CD4-positive, alpha-beta T cell (primary cell): ENCODE measurements at regions of chr10 and their contacts with region 1.

Region 1: DNA sequence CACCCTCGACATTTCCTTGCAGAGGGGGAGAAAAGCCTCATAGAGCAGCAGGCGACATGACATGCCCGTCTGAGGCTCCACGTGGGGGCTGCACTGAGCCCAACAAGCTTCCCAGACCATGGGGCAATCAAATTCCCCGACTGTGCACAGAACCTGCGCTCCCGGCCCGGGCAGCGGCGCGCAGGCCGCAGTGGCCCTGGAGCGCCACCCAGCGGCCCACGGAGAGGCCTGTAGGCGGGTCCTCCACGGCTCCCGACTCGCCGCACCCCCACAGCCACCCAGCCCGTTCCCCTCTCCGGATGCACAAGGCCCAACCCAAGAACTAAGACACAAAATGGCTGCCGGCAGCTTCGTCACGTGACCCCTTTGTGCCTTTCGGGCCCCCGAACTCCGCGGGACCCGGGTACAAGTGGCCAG is 816 bp downstream of the EPC1 start:
- DNase-seq: peak; percentile 91 to 98 (median 95)
- ATAC-seq: peak; percentile 82
- H3K4me3 ChIP-seq: peak overlapping the region; percentile 98
- H3K4me3 Mint-ChIP-seq: peak overlapping the region; percentile 97
- H3K27ac ChIP-seq: peak overlapping the region; percentile 99 to 100
- H3K27ac Mint-ChIP-seq: peak overlapping the region; percentile 100
- H3K4me1 ChIP-seq: peaks cover 27% of the 10 kb centered on the region
- H3K4me1 Mint-ChIP-seq: peaks cover 85% of the 10 kb centered on the region
- H3K27me3 ChIP-seq: no peaks in the 10 kb centered on the region
- H3K27me3 Mint-ChIP-seq: no peaks in the 10 kb centered on the region
- CTCF ChIP-seq: peak; percentile 94

Region 2: DNA sequence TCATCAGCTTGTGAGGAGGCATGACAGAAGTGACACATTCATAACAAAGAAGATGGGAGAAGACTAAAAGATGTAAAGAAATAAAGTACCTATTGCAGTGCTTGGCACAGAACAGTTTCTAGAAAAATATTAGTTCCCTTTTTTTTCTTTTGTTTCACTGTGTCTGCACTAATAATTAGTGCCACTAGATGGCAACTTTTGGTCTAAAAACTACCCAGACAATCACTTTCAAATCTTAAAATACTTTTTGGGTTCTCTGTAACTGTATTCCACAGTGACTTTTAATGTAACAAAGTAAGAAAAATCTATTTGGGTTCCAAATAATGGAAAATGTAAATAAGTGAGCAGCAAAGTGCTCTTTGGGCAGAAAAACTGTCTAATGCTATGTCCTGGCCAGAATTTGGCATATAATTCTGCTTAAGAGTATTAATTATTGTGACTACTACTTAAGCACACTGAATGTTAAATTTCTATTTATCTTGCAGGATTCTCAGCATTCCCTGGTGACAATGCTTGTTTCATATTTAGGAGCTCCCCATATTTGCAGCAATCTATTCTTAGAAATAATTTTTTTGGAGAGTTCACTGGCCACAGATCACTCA is 155.2 kb before region 1 on chr10:
- CTCF ChIA-PET with region 1: interaction called, 5 read pairs
- POLR2A ChIA-PET with region 1: no interaction called
- intact Hi-C with region 1: loop called (anchors 1 kb)
- DNase-seq: peak in 3 of 14 experiments; percentile 53 to 68 (median 64)
- ATAC-seq: peak; percentile 63
- H3K4me3 ChIP-seq: no peak overlapping the region
- H3K4me3 Mint-ChIP-seq: no peak overlapping the region
- H3K27ac ChIP-seq: no peak overlapping the region
- H3K27ac Mint-ChIP-seq: no peak overlapping the region
- H3K4me1 ChIP-seq: no peaks in the 10 kb centered on the region
- H3K4me1 Mint-ChIP-seq: peaks cover 4% of the 10 kb centered on the region
- H3K27me3 ChIP-seq: no peaks in the 10 kb centered on the region
- H3K27me3 Mint-ChIP-seq: peaks cover 5% of the 10 kb centered on the region
- CTCF ChIP-seq: peak; percentile 84

Region 3: DNA sequence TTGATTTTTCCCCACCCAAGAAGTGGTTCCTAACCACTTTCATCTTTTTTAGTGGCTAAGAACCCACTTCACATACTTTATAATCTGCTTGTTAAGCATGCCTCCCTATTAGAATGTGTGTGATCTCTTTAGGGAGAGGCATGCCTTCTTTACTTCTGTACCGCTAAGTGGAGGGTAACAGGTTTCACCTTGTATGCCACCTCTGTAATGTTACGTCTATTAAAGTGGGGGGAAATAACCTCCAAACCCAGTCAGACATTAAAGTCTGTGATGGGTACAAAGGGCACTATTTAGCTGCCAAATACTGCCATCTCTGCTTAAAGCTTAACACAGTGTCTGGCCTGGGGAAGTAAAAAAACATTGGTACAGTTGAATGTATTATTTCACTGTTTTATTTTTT is 51.1 kb before region 1 on chr10:
- CTCF ChIA-PET with region 1: interaction called, 15 read pairs
- POLR2A ChIA-PET with region 1: interaction called, 4 read pairs
- intact Hi-C with region 1: no loop called
- DNase-seq: peak in 2 of 14 experiments; percentile 32 to 51
- ATAC-seq: peak; percentile 81
- H3K4me3 ChIP-seq: no peak overlapping the region
- H3K4me3 Mint-ChIP-seq: no peak overlapping the region
- H3K27ac ChIP-seq: peak overlapping the region in 1 of 2 donors; percentile 14
- H3K27ac Mint-ChIP-seq: peak overlapping the region; percentile 74
- H3K4me1 ChIP-seq: peaks cover 28% of the 10 kb centered on the region
- H3K4me1 Mint-ChIP-seq: peaks cover 62% of the 10 kb centered on the region
- H3K27me3 ChIP-seq: no peaks in the 10 kb centered on the region
- H3K27me3 Mint-ChIP-seq: no peaks in the 10 kb centered on the region
- CTCF ChIP-seq: no peak

Region 4: DNA sequence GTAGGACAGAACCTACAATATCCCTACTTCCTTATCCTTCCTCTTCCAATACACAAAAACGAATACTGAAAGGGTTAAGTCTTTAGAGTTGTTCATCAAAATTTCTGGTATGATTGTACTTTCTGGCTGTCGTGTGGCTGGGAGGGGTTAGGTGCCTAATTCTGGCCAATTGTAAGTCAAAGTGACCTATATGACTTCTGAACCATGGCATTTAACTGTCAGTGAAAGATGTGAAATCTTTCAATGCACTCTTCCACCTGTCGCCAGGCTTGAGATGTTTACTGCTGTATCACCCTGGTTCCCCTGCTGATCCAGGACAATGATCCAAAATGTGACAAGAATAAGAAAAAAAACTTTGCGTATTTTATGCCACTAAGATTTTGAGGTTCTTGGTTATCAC is 20.0 kb before region 1 on chr10:
- CTCF ChIA-PET with region 1: interaction called, 17 read pairs
- POLR2A ChIA-PET with region 1: interaction called, 7 read pairs
- intact Hi-C with region 1: no loop called
- DNase-seq: no peak
- ATAC-seq: no peak
- H3K4me3 ChIP-seq: no peak overlapping the region
- H3K4me3 Mint-ChIP-seq: peak overlapping the region; percentile 38
- H3K27ac ChIP-seq: peak overlapping the region in 1 of 2 donors; percentile 30
- H3K27ac Mint-ChIP-seq: peak overlapping the region; percentile 16
- H3K4me1 ChIP-seq: peaks cover 44% of the 10 kb centered on the region
- H3K4me1 Mint-ChIP-seq: peaks cover 85% of the 10 kb centered on the region
- H3K27me3 ChIP-seq: no peaks in the 10 kb centered on the region
- H3K27me3 Mint-ChIP-seq: no peaks in the 10 kb centered on the region
- CTCF ChIP-seq: no peak

Region 5: GRCh38 chr10:32357056-32357735 is 11.1 kb after region 1 on chr10:
- CTCF ChIA-PET with region 1: interaction called, 10 read pairs
- POLR2A ChIA-PET with region 1: interaction called, 18 read pairs
- intact Hi-C with region 1: no loop called
- DNase-seq: peak in 4 of 14 experiments; percentile 36 to 69 (median 65)
- ATAC-seq: peak; percentile 89
- H3K4me3 ChIP-seq: peak overlapping the region; percentile 8
- H3K4me3 Mint-ChIP-seq: peak overlapping the region; percentile 65
- H3K27ac ChIP-seq: peak overlapping the region in 1 of 2 donors; percentile 51
- H3K27ac Mint-ChIP-seq: peak overlapping the region; percentile 86
- H3K4me1 ChIP-seq: peaks cover 70% of the 10 kb centered on the region
- H3K4me1 Mint-ChIP-seq: peaks cover 80% of the 10 kb centered on the region
- H3K27me3 ChIP-seq: no peaks in the 10 kb centered on the region
- H3K27me3 Mint-ChIP-seq: no peaks in the 10 kb centered on the region
- CTCF ChIP-seq: no peak

Region 6: DNA sequence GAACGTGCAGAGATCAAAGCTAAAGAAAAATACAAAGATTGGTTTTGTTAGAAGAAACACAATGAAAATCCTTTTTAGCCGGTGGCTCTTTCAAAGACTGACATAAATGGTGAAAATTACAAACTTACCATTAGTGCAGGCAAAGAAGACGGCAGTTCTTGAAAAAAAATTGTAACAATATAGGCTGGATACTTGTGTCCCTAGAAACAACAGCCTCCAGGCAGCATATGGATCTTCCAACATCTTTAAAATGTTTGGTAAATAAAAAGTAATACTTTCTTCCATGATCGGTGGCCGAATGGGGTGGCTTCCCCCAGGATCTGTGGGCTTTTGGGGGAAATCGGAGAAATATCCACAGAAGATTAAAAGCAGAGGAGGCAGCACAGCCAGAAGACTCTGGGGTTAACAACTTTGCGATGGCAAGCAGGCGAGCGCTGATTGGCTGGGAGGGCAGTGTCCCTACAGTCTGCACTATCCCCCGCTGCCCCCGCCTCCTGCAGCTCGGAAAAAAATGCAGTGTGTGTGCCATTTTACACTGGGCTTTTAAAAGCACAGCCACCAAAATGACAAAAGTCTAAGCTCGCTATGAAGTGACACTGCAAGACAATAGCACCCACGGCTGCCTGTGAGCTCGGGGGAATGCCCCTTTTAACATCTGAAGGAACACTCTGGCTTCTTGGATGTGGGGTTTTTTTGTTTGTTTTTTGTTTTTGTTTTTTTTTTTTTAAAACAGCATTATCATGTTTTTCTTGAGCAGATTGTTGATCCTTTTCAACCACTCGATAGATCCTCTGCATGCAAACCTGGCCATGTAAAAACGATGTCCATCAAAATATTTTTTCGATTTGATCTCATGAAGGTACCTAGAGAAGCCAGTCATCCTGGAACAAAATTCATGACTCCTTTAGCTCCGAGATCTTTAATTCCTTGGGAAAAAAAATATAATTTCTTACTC is 32.5 kb after region 1 on chr10:
- CTCF ChIA-PET with region 1: interaction called, 30 read pairs
- POLR2A ChIA-PET with region 1: interaction called, 93 read pairs
- intact Hi-C with region 1: loop called in 1 of 2 experiments (anchors 1 kb)
- DNase-seq: peak; percentile 83 to 97 (median 90)
- ATAC-seq: peak; percentile 89
- H3K4me3 ChIP-seq: peak overlapping the region; percentile 79
- H3K4me3 Mint-ChIP-seq: no peak overlapping the region
- H3K27ac ChIP-seq: peak overlapping the region; percentile 61 to 81
- H3K27ac Mint-ChIP-seq: no peak overlapping the region
- H3K4me1 ChIP-seq: no peaks in the 10 kb centered on the region
- H3K4me1 Mint-ChIP-seq: peaks cover 20% of the 10 kb centered on the region
- H3K27me3 ChIP-seq: no peaks in the 10 kb centered on the region
- H3K27me3 Mint-ChIP-seq: no peaks in the 10 kb centered on the region
- CTCF ChIP-seq: no peak

Region 7: DNA sequence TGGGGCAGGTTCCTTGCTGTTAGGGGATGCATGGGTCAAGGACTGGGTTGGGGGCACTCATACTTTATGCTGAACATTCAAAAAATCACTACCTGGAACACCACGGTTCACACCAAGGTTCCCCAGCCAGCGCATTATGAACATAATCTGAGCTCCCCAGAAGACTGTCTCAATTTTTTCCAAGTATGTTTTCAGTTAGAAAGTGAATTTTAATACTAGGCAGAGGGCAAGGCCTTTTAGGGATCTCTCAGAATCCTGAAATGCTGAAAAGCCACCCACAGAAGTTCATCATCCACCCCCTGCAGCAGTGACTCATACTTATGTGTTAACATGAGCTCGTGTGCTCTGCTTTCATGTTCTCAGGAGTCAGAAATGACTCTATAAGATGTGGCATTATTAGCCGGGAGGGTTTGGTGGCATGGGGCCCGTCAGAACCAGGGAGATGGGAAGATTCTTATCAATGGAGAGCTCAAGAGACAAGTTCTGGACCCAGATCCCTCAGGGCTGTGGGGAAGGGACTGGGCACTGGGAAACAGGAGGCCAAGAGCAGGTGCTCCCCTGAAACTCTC is 797.1 kb after region 1 on chr10:
- CTCF ChIA-PET with region 1: no interaction called
- POLR2A ChIA-PET with region 1: interaction called, 4 read pairs
- intact Hi-C with region 1: loop called in 1 of 2 experiments (anchors 10 kb)
- DNase-seq: peak in 8 of 14 experiments; percentile 20 to 70 (median 30)
- ATAC-seq: peak; percentile 14
- H3K4me3 ChIP-seq: no peak overlapping the region
- H3K4me3 Mint-ChIP-seq: no peak overlapping the region
- H3K27ac ChIP-seq: no peak overlapping the region
- H3K27ac Mint-ChIP-seq: peak overlapping the region; percentile 52
- H3K4me1 ChIP-seq: peaks cover 70% of the 10 kb centered on the region
- H3K4me1 Mint-ChIP-seq: peaks cover 52% of the 10 kb centered on the region
- H3K27me3 ChIP-seq: no peaks in the 10 kb centered on the region
- H3K27me3 Mint-ChIP-seq: no peaks in the 10 kb centered on the region
- CTCF ChIP-seq: no peak

Region 8: GRCh38 chr10:33489501-33490176 is 1143.5 kb after region 1 on chr10:
- CTCF ChIA-PET with region 1: no interaction called
- POLR2A ChIA-PET with region 1: no interaction called
- intact Hi-C with region 1: no loop called
- DNase-seq: no peak
- ATAC-seq: no peak
- H3K4me3 ChIP-seq: no peak overlapping the region
- H3K4me3 Mint-ChIP-seq: no peak overlapping the region
- H3K27ac ChIP-seq: no peak overlapping the region
- H3K27ac Mint-ChIP-seq: no peak overlapping the region
- H3K4me1 ChIP-seq: no peaks in the 10 kb centered on the region
- H3K4me1 Mint-ChIP-seq: peaks cover 11% of the 10 kb centered on the region
- H3K27me3 ChIP-seq: no peaks in the 10 kb centered on the region
- H3K27me3 Mint-ChIP-seq: peaks cover 5% of the 10 kb centered on the region
- CTCF ChIP-seq: no peak